A549 (cell line): ENCODE measurements at regions of chr15 and their contacts with region 1.

Region 1: GRCh38 chr15:101641166-101641764 is 10.9 kb downstream of the TM2D3 start:
- DNase-seq: peak; percentile 68 to 73
- ATAC-seq: peak in 1 of 2 experiments; percentile 75; a peak in 3 of 6 replicates
- H3K4me3 ChIP-seq: no peak overlapping the region
- H3K27ac ChIP-seq: no peak overlapping the region
- H3K4me1 ChIP-seq: peaks cover 11% of the 10 kb centered on the region
- CTCF ChIP-seq: peak; percentile 98
- EP300 ChIP-seq: no peak
- POLR2A ChIP-seq: no peak
- RAD21 ChIP-seq: peak; percentile 94 to 98

Region 2: GRCh38 chr15:101277038-101277882 is 364.0 kb before region 1 on chr15 and contains the start of gene SELENOS:
- CTCF ChIA-PET with region 1: interaction called, 251 read pairs
- POLR2A ChIA-PET with region 1: no interaction called
- DNase-seq: peak; percentile 76 to 91
- ATAC-seq: peak; percentile 93 to 96
- H3K4me3 ChIP-seq: peak within 1 kb of the TSS; percentile 77
- H3K27ac ChIP-seq: peak within 1 kb of the TSS; percentile 84 to 91
- H3K4me1 ChIP-seq: peaks cover 13% of the 10 kb centered on the region
- CTCF ChIP-seq: no peak; the same call in 2 of the 3 replicates
- EP300 ChIP-seq: no peak
- POLR2A ChIP-seq: peak; percentile 70
- RAD21 ChIP-seq: no peak
- polyA plus RNA-seq, gene SELENOS: 128 and 184 TPM in 2 replicates

Region 3: DNA sequence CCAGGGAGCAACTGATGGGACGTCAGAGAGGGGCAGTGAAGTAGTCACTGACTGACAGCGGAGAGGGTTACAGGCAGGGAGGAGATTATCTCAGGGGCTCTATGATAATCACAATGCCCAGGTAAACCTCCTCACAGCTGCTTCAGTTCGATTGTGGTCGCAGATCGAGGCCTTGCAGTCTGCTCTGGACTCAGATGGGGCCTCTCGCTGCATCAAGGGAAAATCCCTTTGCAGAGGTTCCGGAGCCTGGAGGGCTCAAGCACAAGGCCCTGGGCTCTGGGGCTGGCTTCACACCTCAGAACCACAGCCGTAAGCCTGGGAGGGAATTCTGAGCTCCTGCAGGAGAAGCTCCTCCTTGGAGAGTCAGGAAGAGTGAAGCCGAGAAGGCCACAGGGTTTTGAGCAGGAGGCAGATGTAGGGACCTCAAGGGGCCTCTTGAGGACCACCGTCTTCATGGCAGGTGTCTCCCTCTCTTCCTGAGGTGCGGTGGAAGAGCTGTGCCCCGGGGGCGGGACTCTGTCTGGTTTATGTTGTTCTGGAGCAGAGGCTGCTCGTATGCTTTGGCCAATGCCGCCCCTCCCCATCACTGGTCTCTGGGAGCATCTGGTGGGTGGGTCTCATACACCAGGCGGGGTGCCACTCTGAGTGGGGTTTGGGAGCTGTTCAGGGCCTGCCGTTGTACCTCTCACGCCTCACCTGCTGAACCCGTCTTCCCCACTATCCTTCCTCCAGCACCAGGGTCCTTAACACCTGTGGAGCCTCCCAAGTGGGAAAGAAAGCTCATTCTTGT is 326.7 kb before region 1 on chr15:
- CTCF ChIA-PET with region 1: interaction called, 227 read pairs
- POLR2A ChIA-PET with region 1: no interaction called
- DNase-seq: no peak
- ATAC-seq: no peak; a peak in 1 of 6 replicates
- H3K4me3 ChIP-seq: no peak overlapping the region
- H3K27ac ChIP-seq: no peak overlapping the region
- H3K4me1 ChIP-seq: no peaks in the 10 kb centered on the region
- CTCF ChIP-seq: no peak
- EP300 ChIP-seq: no peak
- POLR2A ChIP-seq: no peak
- RAD21 ChIP-seq: no peak

Region 4: GRCh38 chr15:101368086-101368780 is 273.0 kb before region 1 on chr15:
- CTCF ChIA-PET with region 1: interaction called, 11 read pairs
- POLR2A ChIA-PET with region 1: no interaction called
- DNase-seq: no peak
- ATAC-seq: no peak
- H3K4me3 ChIP-seq: no peak overlapping the region
- H3K27ac ChIP-seq: no peak overlapping the region
- H3K4me1 ChIP-seq: no peaks in the 10 kb centered on the region
- CTCF ChIP-seq: no peak
- EP300 ChIP-seq: no peak
- POLR2A ChIP-seq: no peak
- RAD21 ChIP-seq: no peak

Region 5: GRCh38 chr15:101501703-101502373 is 139.4 kb before region 1 on chr15:
- CTCF ChIA-PET with region 1: interaction called, 26 read pairs
- POLR2A ChIA-PET with region 1: no interaction called
- DNase-seq: peak; percentile 51 to 87
- ATAC-seq: peak; percentile 92 to 98
- H3K4me3 ChIP-seq: no peak overlapping the region
- H3K27ac ChIP-seq: peak overlapping the region; percentile 51 to 54; a peak in 5 of 6 replicates
- H3K4me1 ChIP-seq: 0 out of 3 replicates have a peak, but pooled peaks cover 6% of the 10 kb centered on the region
- CTCF ChIP-seq: peak; percentile 76
- EP300 ChIP-seq: no peak
- POLR2A ChIP-seq: no peak
- RAD21 ChIP-seq: peak; percentile 65 to 67

Region 6: GRCh38 chr15:101578437-101578894 is 62.8 kb before region 1 on chr15:
- CTCF ChIA-PET with region 1: interaction called, 12 read pairs
- POLR2A ChIA-PET with region 1: no interaction called
- DNase-seq: peak; percentile 70 to 88
- ATAC-seq: peak; percentile 83 to 90
- H3K4me3 ChIP-seq: no peak overlapping the region
- H3K27ac ChIP-seq: peak overlapping the region; percentile 38 to 67; a peak in 4 of 6 replicates
- H3K4me1 ChIP-seq: peaks cover 31% of the 10 kb centered on the region
- CTCF ChIP-seq: peak; percentile 54
- EP300 ChIP-seq: no peak
- POLR2A ChIP-seq: no peak
- RAD21 ChIP-seq: peak; percentile 62 to 74

Region 7: GRCh38 chr15:101652098-101652782 is 11.0 kb after region 1 on chr15 and contains the start of gene TM2D3:
- CTCF ChIA-PET with region 1: interaction called, 71 read pairs
- POLR2A ChIA-PET with region 1: no interaction called
- DNase-seq: peak; percentile 94 to 96
- ATAC-seq: peak; percentile 94 to 97
- H3K4me3 ChIP-seq: peak within 1 kb of the TSS; percentile 71
- H3K27ac ChIP-seq: peak within 1 kb of the TSS; percentile 89 to 98
- H3K4me1 ChIP-seq: peaks cover 19% of the 10 kb centered on the region
- CTCF ChIP-seq: peak; percentile 50
- EP300 ChIP-seq: no peak
- POLR2A ChIP-seq: peak; percentile 93
- RAD21 ChIP-seq: peak; percentile 48 to 64; a peak in 4 of 5 replicates
- polyA plus RNA-seq, gene TM2D3: 76.6 TPM in 2 replicates